ENCODE measurements at regions of chr18 and their contacts with region 1.

Region 1: GRCh38 chr18:31741097-31741735 is 19.5 kb downstream of the SLC25A52 start:
- DNase-seq: peak; percentile 36
- ATAC-seq: peak; percentile 68
- H3K4me3 ChIP-seq: no peak overlapping the region
- H3K27ac ChIP-seq: no peak overlapping the region
- H3K4me1 ChIP-seq: no peaks in the 10 kb centered on the region
- H3K27me3 ChIP-seq: no peaks in the 10 kb centered on the region
- CTCF ChIP-seq: peak; percentile 69
- POLR2A ChIP-seq: no peak
- RAD21 ChIP-seq: peak; percentile 56

Region 2: DNA sequence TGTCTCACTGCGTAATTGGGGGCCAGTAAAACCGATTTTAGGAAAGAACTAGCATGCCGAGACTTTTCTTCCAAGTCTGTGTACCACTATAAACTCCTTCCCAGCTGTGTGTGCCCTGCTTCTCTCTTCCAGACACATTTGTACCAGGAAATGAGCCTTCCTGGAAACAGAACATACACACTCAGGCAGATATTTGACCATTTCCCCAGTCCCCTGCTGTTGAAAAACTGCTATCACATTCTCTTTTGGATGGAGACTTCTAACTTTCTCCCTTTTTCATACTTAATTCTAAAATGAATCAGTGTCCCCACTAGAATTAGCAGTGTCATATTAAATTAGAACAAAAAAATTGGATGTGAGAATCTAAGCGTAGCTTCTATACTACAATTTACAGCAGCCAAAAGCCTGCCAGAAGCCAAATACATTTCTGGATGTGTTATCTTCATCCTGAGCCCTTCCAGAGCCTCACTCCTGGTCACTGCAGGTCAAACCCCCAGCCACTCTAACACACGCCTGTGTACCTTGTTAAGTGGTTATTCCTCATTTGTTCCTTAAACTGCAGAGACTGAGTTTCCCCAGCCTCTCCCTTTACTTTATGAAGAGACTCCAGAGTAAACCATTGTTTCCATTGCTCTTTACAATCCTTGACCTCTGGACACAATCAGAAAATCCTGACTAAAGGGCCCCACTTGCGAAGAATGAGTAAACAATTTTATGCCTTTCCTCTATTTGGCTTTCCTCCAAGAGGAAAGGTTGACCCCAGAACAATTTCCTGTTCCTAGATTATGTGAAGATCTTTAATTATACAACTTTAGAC is 344.2 kb before region 1 on chr18:
- CTCF ChIA-PET with region 1: no interaction called
- POLR2A ChIA-PET with region 1: no interaction called
- dilution Hi-C with region 1: no loop called
- in situ Hi-C with region 1: no loop called
- intact Hi-C with region 1: no loop called
- DNase-seq: no peak
- ATAC-seq: no peak
- H3K4me3 ChIP-seq: no peak overlapping the region
- H3K27ac ChIP-seq: no peak overlapping the region
- H3K4me1 ChIP-seq: no peaks in the 10 kb centered on the region
- H3K27me3 ChIP-seq: no peaks in the 10 kb centered on the region
- CTCF ChIP-seq: no peak
- POLR2A ChIP-seq: no peak
- RAD21 ChIP-seq: no peak

Region 3: DNA sequence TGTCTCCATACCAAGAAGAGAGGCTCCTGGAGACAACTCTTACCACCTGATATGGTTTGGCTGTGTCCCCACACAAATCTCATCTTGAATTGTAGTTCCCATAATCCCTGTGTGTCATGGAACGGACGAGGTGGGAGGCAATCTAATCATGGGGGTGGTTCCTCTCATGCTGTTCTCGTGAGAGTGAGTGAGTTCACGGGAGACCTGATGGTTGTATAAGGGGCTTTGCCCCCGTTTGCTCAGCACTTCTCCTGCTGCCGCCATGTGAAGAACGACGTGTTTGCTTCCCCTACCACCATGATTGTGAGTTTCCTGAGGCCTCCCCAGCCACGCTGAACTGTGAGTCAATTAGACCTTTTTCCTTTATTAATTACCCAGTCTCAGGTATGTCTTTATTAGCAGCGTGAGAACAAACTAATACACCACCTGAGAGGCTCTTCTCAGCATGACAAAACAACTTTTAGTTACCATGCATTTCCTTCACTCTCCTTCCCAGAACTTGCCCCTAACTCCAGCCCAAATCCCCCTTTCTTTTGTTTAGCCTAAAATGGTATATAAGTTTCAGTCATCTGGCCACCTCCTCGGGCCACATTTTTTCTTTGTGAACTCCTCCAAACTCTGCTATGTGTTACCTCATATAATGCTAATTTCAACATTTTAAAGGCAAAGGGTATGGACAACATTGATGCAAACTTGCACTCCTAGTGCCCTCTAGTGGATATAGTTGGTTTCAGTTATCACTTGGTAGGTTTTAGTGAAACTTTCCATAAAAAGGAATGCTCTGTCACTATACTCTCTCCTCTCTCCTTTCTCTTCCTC is 78.1 kb after region 1 on chr18:
- CTCF ChIA-PET with region 1: interaction called, 4 read pairs
- POLR2A ChIA-PET with region 1: no interaction called
- dilution Hi-C with region 1: no loop called
- in situ Hi-C with region 1: no loop called
- intact Hi-C with region 1: loop called (anchors 1 kb)
- DNase-seq: peak; percentile 52
- ATAC-seq: peak; percentile 92
- H3K4me3 ChIP-seq: no peak overlapping the region
- H3K27ac ChIP-seq: no peak overlapping the region
- H3K4me1 ChIP-seq: no peaks in the 10 kb centered on the region
- H3K27me3 ChIP-seq: no peaks in the 10 kb centered on the region
- CTCF ChIP-seq: peak; percentile 73
- POLR2A ChIP-seq: no peak
- RAD21 ChIP-seq: peak; percentile 56

Region 4: GRCh38 chr18:31954349-31954748 is 213.1 kb after region 1 on chr18:
- CTCF ChIA-PET with region 1: no interaction called
- POLR2A ChIA-PET with region 1: no interaction called
- dilution Hi-C with region 1: no loop called
- in situ Hi-C with region 1: no loop called
- intact Hi-C with region 1: loop called (anchors 1 kb)
- DNase-seq: peak; percentile 10
- ATAC-seq: no peak
- H3K4me3 ChIP-seq: no peak overlapping the region
- H3K27ac ChIP-seq: no peak overlapping the region
- H3K4me1 ChIP-seq: no peaks in the 10 kb centered on the region
- H3K27me3 ChIP-seq: no peaks in the 10 kb centered on the region
- CTCF ChIP-seq: no peak
- POLR2A ChIP-seq: no peak
- RAD21 ChIP-seq: no peak

Region 5: DNA sequence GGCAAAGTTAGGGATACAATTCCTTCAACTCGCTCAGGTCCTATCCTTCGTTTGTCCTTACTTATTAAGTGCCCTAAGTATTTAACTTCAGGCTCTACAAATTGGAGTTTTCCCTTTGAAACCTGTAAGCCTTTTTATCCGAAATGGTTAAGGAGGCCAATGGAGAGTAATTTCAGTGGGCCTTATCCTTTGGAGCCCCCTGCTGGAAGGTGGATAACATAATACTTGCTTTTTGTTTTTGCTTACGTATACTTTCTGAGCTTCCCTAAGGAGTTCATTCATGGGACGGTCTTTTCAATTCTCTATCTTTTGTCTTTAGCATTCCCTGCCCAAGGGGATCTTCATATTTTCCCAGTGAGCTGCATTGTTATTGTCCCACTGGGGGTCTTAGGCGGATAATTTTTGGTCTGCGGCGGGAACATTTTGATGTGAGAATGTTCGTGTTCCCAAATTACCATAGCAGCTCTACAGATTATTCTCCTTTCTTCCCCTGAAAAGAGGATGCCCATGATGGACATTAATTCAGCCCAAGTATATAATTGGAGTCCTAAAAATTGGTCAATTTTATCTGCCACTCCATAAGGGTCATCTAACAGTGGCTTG is 236.2 kb after region 1 on chr18:
- CTCF ChIA-PET with region 1: no interaction called
- POLR2A ChIA-PET with region 1: no interaction called
- dilution Hi-C with region 1: no loop called
- in situ Hi-C with region 1: loop called (anchors 10 kb)
- intact Hi-C with region 1: loop called (anchors 1 kb)
- DNase-seq: peak; percentile 54
- ATAC-seq: peak; percentile 72; the same call in 1 of the 2 replicates
- H3K4me3 ChIP-seq: no peak overlapping the region
- H3K27ac ChIP-seq: no peak overlapping the region
- H3K4me1 ChIP-seq: no peaks in the 10 kb centered on the region
- H3K27me3 ChIP-seq: no peaks in the 10 kb centered on the region
- CTCF ChIP-seq: peak; percentile 74
- POLR2A ChIP-seq: no peak
- RAD21 ChIP-seq: peak; percentile 80